MCF 10A (cell line): ENCODE measurements at regions of chr13 and their contacts with region 1.

Region 1: GRCh38 chr13:51557875-51558612 is 26.2 kb upstream of the WDFY2 start:
- DNase-seq: peak; percentile 79
- H3K4me3 Mint-ChIP-seq: peak overlapping the region; percentile 53
- H3K27ac Mint-ChIP-seq: peak overlapping the region; percentile 69
- H3K4me1 Mint-ChIP-seq: peaks cover 39% of the 10 kb centered on the region
- H3K27me3 Mint-ChIP-seq: no peaks in the 10 kb centered on the region
- CTCF ChIP-seq: no peak

Region 2: GRCh38 chr13:51154029-51154555 is 404.0 kb before region 1 on chr13:
- CTCF ChIA-PET with region 1: no interaction called
- POLR2A ChIA-PET with region 1: no interaction called
- intact Hi-C with region 1: no loop called
- DNase-seq: peak; percentile 41
- H3K4me3 Mint-ChIP-seq: no peak overlapping the region
- H3K27ac Mint-ChIP-seq: no peak overlapping the region
- H3K4me1 Mint-ChIP-seq: no peaks in the 10 kb centered on the region
- H3K27me3 Mint-ChIP-seq: peaks cover 60% of the 10 kb centered on the region
- CTCF ChIP-seq: no peak

Region 3: GRCh38 chr13:51523082-51523518 is 34.9 kb before region 1 on chr13:
- CTCF ChIA-PET with region 1: interaction called, 4 read pairs
- POLR2A ChIA-PET with region 1: interaction called, 46 read pairs
- intact Hi-C with region 1: no loop called
- DNase-seq: peak; percentile 96
- H3K4me3 Mint-ChIP-seq: peak overlapping the region; percentile 25
- H3K27ac Mint-ChIP-seq: no peak overlapping the region
- H3K4me1 Mint-ChIP-seq: peaks cover 25% of the 10 kb centered on the region
- H3K27me3 Mint-ChIP-seq: no peaks in the 10 kb centered on the region
- CTCF ChIP-seq: no peak

Region 4: DNA sequence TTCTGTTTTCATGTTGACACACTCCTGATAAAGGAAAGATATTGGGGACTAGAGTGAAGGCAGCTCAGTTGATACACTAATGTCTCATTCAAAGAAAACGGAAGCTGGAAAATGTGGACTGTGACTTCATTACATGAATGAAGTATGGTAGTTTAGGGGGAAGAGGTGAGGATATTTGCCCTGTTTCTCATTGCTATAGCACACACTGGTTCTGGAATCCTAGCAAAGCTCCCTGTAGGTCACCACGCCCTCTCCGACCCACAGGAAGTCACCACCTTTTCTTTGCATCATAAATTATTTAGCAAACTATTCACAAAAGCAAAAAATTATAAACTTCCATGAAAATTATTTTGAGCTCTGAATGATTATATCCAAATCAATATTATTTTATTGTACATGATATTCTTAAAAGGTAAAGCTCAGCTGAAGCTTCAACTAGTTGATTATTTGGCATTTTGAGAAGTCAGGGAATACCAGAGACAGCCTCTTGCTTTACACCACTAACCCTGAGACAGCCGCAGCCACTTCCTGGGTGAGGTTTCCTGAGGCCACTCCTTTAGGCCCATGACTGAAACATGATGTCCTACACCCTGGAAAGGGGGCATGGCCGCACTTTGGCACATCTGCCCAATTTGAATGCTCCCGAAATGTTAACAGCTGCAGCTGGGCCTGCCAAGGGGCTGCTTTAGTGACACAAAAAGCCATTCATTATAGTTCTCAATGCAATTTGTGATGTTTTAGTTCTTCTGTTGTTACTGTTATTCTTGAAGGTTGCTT is 23.8 kb before region 1 on chr13:
- CTCF ChIA-PET with region 1: interaction called, 4 read pairs
- POLR2A ChIA-PET with region 1: interaction called, 21 read pairs
- intact Hi-C with region 1: no loop called
- DNase-seq: peak; percentile 62
- H3K4me3 Mint-ChIP-seq: no peak overlapping the region
- H3K27ac Mint-ChIP-seq: peak overlapping the region; percentile 89
- H3K4me1 Mint-ChIP-seq: peaks cover 13% of the 10 kb centered on the region
- H3K27me3 Mint-ChIP-seq: no peaks in the 10 kb centered on the region
- CTCF ChIP-seq: no peak

Region 5: DNA sequence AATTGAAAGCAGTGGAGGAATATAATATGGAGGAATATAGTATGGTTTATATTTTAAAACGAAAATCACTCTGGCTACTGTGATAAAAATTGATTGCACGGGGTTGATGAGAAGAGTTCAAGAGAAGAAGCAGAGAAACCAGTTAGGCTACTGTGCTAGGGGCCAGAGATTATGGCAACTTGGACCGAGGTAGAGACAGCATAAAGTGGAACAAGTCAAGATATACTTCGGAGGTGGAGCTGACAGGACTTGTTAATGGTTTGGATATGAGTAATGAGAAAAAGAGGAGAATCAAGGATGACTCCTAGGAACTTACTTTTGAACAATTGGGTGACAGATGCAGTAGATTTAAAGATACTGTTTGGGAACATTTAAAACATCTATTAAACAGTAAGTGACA is 19.6 kb after region 1 on chr13:
- CTCF ChIA-PET with region 1: no interaction called
- POLR2A ChIA-PET with region 1: interaction called, 11 read pairs
- intact Hi-C with region 1: no loop called
- DNase-seq: no peak
- H3K4me3 Mint-ChIP-seq: peak overlapping the region; percentile 37
- H3K27ac Mint-ChIP-seq: peak overlapping the region; percentile 20
- H3K4me1 Mint-ChIP-seq: peaks cover 46% of the 10 kb centered on the region
- H3K27me3 Mint-ChIP-seq: no peaks in the 10 kb centered on the region
- CTCF ChIP-seq: no peak

Region 6: GRCh38 chr13:51684076-51684475 is 126.0 kb after region 1 on chr13:
- CTCF ChIA-PET with region 1: no interaction called
- POLR2A ChIA-PET with region 1: no interaction called
- intact Hi-C with region 1: no loop called
- DNase-seq: no peak
- H3K4me3 Mint-ChIP-seq: no peak overlapping the region
- H3K27ac Mint-ChIP-seq: peak overlapping the region; percentile 78
- H3K4me1 Mint-ChIP-seq: peaks cover 43% of the 10 kb centered on the region
- H3K27me3 Mint-ChIP-seq: no peaks in the 10 kb centered on the region
- CTCF ChIP-seq: no peak

Region 7: GRCh38 chr13:51697181-51697580 is 139.1 kb after region 1 on chr13:
- CTCF ChIA-PET with region 1: no interaction called
- POLR2A ChIA-PET with region 1: interaction called, 13 read pairs
- intact Hi-C with region 1: no loop called
- DNase-seq: peak; percentile 51
- H3K4me3 Mint-ChIP-seq: no peak overlapping the region
- H3K27ac Mint-ChIP-seq: peak overlapping the region; percentile 69
- H3K4me1 Mint-ChIP-seq: peaks cover 18% of the 10 kb centered on the region
- H3K27me3 Mint-ChIP-seq: no peaks in the 10 kb centered on the region
- CTCF ChIP-seq: no peak

Region 8: DNA sequence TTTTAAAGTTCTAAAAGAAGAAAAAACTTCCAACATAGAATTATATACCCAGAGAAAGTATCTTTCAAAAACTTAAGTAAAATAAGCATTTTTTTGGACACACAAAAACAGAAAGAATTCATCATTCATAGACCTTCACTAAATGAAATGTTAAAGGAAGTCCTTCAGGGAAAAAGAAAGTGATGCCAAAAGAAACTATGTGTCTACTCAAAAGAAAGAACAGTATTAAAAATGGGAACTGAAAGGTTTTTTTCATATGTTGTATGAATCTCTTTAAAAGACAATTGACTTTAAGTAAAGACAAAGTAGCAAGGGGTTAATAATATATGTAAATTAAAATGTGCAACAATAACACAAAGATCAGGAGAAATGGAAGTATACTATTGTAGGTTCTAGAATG is 149.4 kb after region 1 on chr13:
- CTCF ChIA-PET with region 1: no interaction called
- POLR2A ChIA-PET with region 1: no interaction called
- intact Hi-C with region 1: no loop called
- DNase-seq: no peak
- H3K4me3 Mint-ChIP-seq: no peak overlapping the region
- H3K27ac Mint-ChIP-seq: peak overlapping the region; percentile 67
- H3K4me1 Mint-ChIP-seq: no peaks in the 10 kb centered on the region
- H3K27me3 Mint-ChIP-seq: no peaks in the 10 kb centered on the region
- CTCF ChIP-seq: no peak

Region 9: DNA sequence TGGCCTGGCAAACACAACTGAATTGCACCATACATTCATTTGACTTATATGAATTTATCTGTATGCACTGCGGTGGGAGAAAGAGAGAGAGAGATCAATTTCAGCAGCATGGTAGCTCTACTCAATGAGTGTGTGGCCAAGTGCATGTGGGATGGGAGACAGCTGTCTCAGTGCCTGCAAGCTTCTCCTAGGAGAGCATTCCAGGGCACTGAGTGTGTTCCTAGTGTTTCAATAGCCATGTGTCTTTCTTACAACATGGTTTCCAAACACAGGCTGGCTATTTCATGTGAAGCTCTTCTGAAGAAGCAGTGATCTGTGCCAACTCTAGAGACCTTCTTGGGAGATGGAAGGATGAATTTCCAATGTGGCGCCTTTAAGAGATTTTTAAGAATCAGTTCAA is 527.4 kb after region 1 on chr13:
- CTCF ChIA-PET with region 1: no interaction called
- POLR2A ChIA-PET with region 1: no interaction called
- intact Hi-C with region 1: no loop called
- DNase-seq: peak; percentile 30
- H3K4me3 Mint-ChIP-seq: no peak overlapping the region
- H3K27ac Mint-ChIP-seq: no peak overlapping the region
- H3K4me1 Mint-ChIP-seq: peaks cover 9% of the 10 kb centered on the region
- H3K27me3 Mint-ChIP-seq: no peaks in the 10 kb centered on the region
- CTCF ChIP-seq: no peak